ENCODE measurements at regions of chr20 and their contacts with region 1.

Region 1: GRCh38 chr20:50303573-50304501 is 113.2 kb downstream of the CEBPB start:
- DNase-seq: no peak
- H3K4me3 ChIP-seq: no peak overlapping the region
- H3K27ac ChIP-seq: peak overlapping the region; percentile 99
- H3K27me3 ChIP-seq: no peaks in the 10 kb centered on the region
- CTCF ChIP-seq: no peak

Region 2: DNA sequence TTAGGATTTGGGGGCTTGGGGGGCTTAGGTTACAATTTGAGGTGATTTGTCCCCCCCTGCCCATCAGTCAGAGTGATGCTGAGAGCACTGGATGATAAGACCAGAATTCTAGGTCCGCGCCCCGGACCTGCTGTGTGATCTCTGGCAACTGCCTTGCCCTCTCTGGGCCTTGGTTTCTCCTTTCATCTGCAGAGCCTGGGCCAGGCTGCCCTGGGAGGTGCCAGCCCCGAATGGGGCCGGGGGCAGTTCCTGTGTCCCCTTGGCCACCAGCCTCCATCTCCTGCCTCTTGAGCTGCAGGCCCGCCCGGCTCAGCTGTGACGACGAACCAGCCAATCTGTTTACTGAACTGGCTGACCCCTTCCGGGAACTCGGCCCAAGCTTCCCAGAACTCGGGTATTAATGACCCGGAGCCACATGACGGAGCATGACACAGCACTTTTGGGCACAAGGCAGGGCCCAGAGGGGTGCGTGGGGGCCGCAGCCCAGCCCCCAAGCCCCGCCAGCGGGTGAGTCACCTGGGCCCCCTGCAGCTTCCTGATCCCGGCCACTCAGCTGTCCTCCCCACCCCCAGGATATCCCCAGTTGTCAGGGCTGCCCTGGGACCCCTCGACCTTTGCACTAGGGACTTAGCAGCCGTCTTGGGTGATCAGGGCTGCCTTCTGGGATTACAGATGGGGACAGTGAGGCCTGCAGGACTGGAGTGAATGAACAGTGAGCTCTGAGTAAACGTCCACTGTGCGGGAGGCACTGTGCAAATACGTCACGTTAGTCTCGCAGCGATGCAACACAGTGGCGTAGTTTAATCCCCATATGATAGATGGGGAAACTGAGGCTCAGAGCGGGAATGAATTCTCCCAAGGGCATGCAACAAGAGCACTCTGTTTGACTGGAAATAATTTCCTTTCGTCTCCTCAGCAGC is 11.3 kb before region 1 on chr20:
- CTCF ChIA-PET with region 1: no interaction called
- POLR2A ChIA-PET with region 1: interaction called, 10 read pairs
- DNase-seq: peak; percentile 93
- H3K4me3 ChIP-seq: no peak overlapping the region
- H3K27ac ChIP-seq: peak overlapping the region; percentile 95
- H3K27me3 ChIP-seq: no peaks in the 10 kb centered on the region
- CTCF ChIP-seq: no peak